Thyroid gland (tissue), 4 donors: ENCODE measurements at regions of chr11 and their contacts with region 1.

Region 1: GRCh38 chr11:124673333-124674167 is at the starts of genes SIAE and SPA17:
- DNase-seq: peak; percentile 96 to 97
- H3K4me3 ChIP-seq: peak within 1 kb of the TSS; percentile 31 to 69 (median 62)
- H3K27ac ChIP-seq: peak within 1 kb of the TSS; percentile 75 to 89 (median 87)
- H3K4me1 ChIP-seq: peaks cover 18 to 25% of the 10 kb centered on the region in 2 donors
- H3K27me3 ChIP-seq: no peaks in the 10 kb centered on the region
- CTCF ChIP-seq: no peak
- POLR2A ChIP-seq: peak; percentile 30 to 87
- total RNA-seq, gene SIAE: 33.9 to 52.5 (median 41.6) TPM
- total RNA-seq, gene SPA17: 13.8 to 25.2 (median 23.6) TPM

Region 2: DNA sequence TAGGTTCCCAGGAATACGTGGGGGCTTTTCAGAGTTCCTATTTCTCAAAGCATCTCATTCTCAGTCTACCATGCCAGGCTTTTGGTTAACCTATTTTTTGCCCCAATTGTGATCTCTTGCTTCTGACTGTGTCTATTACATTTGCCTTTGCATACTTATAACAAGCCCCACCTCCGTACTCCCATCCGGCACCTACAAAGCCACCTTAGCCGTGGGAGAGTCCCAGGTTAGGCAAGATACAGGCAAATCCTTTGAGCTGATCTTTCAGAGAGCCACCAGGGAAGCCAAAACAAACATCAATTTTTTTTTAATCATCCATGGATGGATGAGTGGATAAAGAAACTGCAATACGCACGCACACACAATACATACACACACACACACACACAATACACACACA is 80.9 kb before region 1 on chr11:
- intact Hi-C with region 1: no loop called
- DNase-seq: no peak
- H3K4me3 ChIP-seq: no peak overlapping the region
- H3K27ac ChIP-seq: no peak overlapping the region
- H3K4me1 ChIP-seq: no peaks in the 10 kb centered on the region
- H3K27me3 ChIP-seq: no peaks in the 10 kb centered on the region
- CTCF ChIP-seq: no peak
- POLR2A ChIP-seq: no peak

Region 3: DNA sequence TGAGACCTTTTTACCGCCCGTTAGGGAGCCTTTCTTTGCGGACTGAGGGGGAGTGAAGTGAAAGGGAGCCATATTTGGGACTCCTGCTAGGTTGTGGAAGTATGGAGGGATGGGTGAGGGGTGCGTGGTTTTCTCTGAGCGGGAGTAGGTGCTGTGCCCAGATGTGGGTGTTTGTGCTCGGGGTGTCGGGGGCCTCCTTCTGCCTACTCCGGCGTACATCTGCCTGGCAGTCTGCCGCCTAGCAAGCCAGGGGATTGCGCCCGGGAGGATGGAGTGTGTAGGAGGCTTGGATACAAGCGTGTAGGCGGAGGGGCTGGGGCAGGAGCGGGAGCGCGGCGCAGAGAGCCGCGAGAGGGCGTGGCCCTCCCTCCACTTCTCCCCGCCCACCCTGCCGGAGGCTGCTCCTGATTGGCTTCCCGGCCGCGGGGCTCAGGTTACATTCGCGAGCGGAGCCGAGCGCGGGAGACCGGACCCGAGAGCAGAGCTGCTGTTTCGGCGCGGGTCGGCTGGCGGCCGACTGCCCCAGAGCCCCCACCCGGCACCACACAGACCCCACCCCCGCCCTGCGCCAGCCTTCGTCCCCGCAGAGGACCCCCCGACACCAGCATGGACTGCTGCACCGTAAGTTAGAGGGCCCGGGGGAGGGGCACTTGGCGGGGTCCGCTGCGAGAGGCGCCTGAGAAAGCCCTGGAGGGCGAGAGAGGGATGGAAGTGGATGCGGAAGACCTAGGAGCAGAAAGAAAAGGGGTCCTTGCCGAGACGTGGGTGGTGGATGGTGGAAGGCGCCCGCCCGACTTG is 66.1 kb after region 1 on chr11 and contains the start of gene NRGN:
- intact Hi-C with region 1: loop called (anchors 5 kb)
- DNase-seq: peak; percentile 94 to 95
- H3K4me3 ChIP-seq: peak within 1 kb of the TSS; percentile 5 to 49 (median 35)
- H3K27ac ChIP-seq: no peak within 1 kb of the TSS
- H3K4me1 ChIP-seq: peaks cover 9 to 22% of the 10 kb centered on the region in 2 donors
- H3K27me3 ChIP-seq: no peaks in the 10 kb centered on the region
- CTCF ChIP-seq: no peak
- POLR2A ChIP-seq: peak in 1 of 2 donors; percentile 50
- total RNA-seq, gene NRGN: 0.40 to 3.6 (median 2.7) TPM

Region 4: GRCh38 chr11:124763156-124763947 is 89.8 kb after region 1 on chr11:
- intact Hi-C with region 1: loop called (anchors 5 kb)
- DNase-seq: peak; percentile 95 to 98
- H3K4me3 ChIP-seq: peak overlapping the region; percentile 30 to 93 (median 65)
- H3K27ac ChIP-seq: peak overlapping the region; percentile 89 to 98 (median 94)
- H3K4me1 ChIP-seq: peaks cover 28 to 51% of the 10 kb centered on the region in 2 donors
- H3K27me3 ChIP-seq: no peaks in the 10 kb centered on the region
- CTCF ChIP-seq: peak; percentile 57 to 88 (median 74)
- POLR2A ChIP-seq: peak in 1 of 2 donors; percentile 29

Region 5: DNA sequence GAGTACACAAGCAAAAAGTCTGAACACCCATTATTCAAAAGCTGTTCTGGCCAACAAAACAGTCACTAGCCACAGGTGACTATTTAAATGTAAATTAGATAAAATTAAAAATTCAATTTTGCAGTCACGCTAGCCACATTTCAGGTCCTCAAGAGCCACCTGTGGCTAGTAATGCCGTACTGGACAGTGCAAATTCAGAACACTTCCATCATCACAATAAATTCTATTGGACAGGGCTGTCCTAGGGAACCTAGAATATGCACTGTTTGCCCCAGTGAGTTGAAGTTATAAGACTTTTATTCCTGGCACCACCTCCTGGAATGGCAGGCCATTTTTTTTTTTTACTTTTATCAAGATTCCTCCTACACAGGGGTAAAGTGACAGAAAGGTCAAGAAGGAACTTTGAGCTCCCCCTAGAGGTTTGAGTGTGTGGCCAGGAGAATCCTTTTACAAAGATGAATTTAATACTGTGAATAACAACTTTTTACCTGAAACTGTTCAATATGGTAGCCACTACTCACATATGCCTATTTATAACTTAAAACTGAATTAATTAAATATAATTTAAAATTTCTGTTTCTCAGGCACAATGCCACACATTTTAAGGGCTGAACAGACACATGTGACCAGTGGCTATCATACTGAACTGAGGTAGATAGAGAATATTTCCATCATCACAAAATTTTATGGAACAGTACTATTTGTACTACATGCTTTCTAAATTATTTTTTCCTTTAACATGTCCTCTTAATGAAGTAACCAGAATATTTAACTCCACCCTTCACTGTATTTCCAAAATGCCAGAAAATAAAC is 120.1 kb after region 1 on chr11:
- intact Hi-C with region 1: loop called (anchors 5 kb)
- DNase-seq: peak; percentile 37 to 44
- H3K4me3 ChIP-seq: no peak overlapping the region
- H3K27ac ChIP-seq: peak overlapping the region in 1 of 3 donors; percentile 14
- H3K4me1 ChIP-seq: peaks cover 39 to 46% of the 10 kb centered on the region in 2 donors
- H3K27me3 ChIP-seq: no peaks in the 10 kb centered on the region
- CTCF ChIP-seq: peak; percentile 32 to 86 (median 69)
- POLR2A ChIP-seq: no peak

Region 6: GRCh38 chr11:124837491-124837856 is 163.9 kb after region 1 on chr11:
- intact Hi-C with region 1: loop called (anchors 2 kb)
- DNase-seq: peak; percentile 23 to 39
- H3K4me3 ChIP-seq: no peak overlapping the region
- H3K27ac ChIP-seq: peak overlapping the region in 1 of 3 donors; percentile 92
- H3K4me1 ChIP-seq: peaks cover 12 to 31% of the 10 kb centered on the region in 2 donors
- H3K27me3 ChIP-seq: no peaks in the 10 kb centered on the region
- CTCF ChIP-seq: peak in 5 of 6 experiments; percentile 22 to 61 (median 41)
- POLR2A ChIP-seq: no peak

Region 7: GRCh38 chr11:124865921-124866583 is 192.5 kb after region 1 on chr11:
- intact Hi-C with region 1: loop called (anchors 10 kb)
- DNase-seq: peak; percentile 48 to 52
- H3K4me3 ChIP-seq: peak overlapping the region in 1 of 3 donors; percentile 18
- H3K27ac ChIP-seq: no peak overlapping the region
- H3K4me1 ChIP-seq: peaks cover 20 to 46% of the 10 kb centered on the region in 2 donors
- H3K27me3 ChIP-seq: peaks cover 29% of the 10 kb centered on the region
- CTCF ChIP-seq: peak; percentile 37 to 84 (median 60)
- POLR2A ChIP-seq: no peak